Activated B cell treated with CpG ODN at 0.5 μM for 24 hours (primary cell): ENCODE measurements at regions of chr1 and their contacts with region 1.

Region 1: DNA sequence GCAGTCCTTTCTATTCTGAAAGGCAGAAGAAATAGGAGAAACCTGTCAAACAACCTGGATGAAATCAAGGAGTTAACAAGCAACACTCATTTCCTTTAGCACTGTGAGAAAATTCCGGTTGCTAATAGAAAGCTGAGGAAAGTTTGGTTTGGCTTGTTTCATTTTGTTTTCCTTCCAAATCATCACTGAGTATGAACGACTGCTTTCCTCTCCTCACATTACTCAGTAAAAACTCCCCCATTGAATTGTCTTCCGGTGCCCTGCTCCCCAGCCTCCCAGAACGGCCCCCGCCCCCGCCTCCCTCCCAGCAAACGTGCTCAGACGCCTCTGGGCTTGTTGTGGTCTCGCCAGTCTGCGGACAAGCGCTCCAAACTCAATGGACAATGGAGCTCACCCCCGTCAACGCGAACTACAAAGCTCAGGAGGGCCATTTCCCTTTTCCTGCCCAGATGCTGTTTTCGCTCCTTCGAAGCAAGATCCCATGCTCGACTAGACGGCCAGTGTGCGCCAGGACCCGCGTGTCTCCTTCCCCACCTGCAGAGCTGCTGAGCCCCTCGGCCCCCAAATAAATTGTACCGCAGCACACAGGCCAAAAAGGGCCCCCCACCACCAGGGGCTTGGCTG is 747 bp downstream of the STX6 start:
- DNase-seq: no peak
- ATAC-seq: peak; percentile 37
- H3K4me3 Mint-ChIP-seq: peak overlapping the region; percentile 96
- H3K27ac Mint-ChIP-seq: peak overlapping the region; percentile 94
- H3K4me1 Mint-ChIP-seq: peaks cover 40% of the 10 kb centered on the region
- H3K27me3 Mint-ChIP-seq: no peaks in the 10 kb centered on the region
- CTCF ChIP-seq: no peak

Region 2: DNA sequence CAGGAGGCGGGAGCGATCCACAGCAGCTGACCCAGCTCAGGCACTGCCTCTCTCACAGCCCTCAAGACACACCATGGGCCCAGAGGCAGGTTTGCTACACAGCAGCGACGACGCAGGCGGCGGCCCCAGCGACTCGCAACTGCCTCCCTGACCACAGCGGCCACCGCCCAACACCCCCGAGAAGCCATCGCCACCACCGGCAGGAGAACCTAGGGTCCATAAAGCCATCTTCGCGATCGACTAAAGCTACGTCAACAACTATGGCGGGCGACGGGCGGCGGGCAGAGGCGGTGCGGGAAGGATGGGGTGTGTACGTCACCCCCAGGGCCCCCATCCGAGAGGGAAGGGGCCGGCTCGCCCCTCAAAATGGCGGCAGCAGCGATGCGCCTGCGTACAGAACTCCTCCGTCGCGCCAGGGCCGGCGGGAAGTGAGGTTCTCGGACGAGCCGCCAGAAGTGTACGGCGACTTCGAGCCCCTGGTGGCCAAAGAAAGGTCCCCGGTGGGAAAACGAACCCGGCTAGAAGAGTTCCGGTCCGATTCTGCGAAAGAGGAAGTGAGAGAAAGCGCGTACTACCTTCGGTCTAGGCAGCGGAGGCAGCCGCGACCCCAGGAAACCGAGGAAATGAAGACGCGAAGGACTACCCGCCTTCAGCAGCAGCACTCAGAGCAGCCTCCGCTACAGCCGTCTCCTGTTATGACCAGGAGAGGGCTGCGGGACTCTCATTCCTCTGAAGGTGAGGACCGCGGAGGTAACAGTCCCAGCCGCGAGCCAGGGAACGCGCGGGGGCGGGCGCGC is 1139.5 kb before region 1 on chr1 and contains the start of gene TOR1AIP1:
- CTCF ChIA-PET with region 1: no interaction called
- POLR2A ChIA-PET with region 1: no interaction called
- intact Hi-C with region 1: loop called (anchors 1 kb)
- DNase-seq: peak; percentile 96
- ATAC-seq: peak; percentile 76
- H3K4me3 Mint-ChIP-seq: peak within 1 kb of the TSS; percentile 100
- H3K27ac Mint-ChIP-seq: peak within 1 kb of the TSS; percentile 100
- H3K4me1 Mint-ChIP-seq: peaks cover 64% of the 10 kb centered on the region
- H3K27me3 Mint-ChIP-seq: no peaks in the 10 kb centered on the region
- CTCF ChIP-seq: no peak
- total RNA-seq, gene TOR1AIP1: 42.3 and 46.6 TPM in 2 replicates

Region 3: DNA sequence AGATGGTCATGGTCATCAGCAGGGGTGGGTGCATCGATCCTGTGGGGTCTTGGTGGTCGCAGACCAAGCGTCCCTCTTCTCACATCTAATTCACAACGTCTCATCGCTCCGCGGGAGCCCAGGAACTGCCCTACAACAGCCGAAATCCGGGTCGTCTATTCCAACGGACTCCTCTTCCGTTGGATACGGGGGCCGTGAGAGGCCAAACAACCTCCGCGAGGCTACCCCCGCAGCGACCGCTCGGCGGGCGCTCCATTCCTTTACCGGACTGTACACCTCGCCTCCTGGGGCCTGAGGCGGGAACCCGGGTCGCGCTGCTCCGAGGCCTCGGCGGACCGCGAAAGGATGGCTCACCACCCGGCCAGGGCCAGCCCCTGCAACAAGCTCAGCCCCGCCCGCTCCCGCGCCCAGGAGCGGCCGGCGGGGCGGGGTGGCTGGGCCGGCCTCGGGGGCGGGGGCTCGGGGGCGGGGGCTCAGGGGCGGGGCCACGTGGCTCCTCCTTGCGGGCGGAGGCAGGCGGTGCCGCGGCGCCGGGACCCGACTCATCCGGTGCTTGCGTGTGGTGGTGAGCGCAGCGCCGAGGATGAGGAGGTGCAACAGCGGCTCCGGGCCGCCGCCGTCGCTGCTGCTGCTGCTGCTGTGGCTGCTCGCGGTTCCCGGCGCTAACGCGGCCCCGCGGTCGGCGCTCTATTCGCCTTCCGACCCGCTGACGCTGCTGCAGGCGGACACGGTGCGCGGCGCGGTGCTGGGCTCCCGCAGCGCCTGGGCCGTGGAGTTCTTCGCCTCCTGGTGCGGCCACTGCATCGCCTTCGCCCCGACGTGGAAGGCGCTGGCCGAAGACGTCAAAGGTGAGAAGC is 867.4 kb before region 1 on chr1 and contains the start of gene QSOX1:
- CTCF ChIA-PET with region 1: no interaction called
- POLR2A ChIA-PET with region 1: no interaction called
- intact Hi-C with region 1: loop called (anchors 10 kb)
- DNase-seq: peak; percentile 79
- ATAC-seq: peak; percentile 97
- H3K4me3 Mint-ChIP-seq: peak within 1 kb of the TSS; percentile 96
- H3K27ac Mint-ChIP-seq: peak within 1 kb of the TSS; percentile 83
- H3K4me1 Mint-ChIP-seq: peaks cover 23% of the 10 kb centered on the region
- H3K27me3 Mint-ChIP-seq: no peaks in the 10 kb centered on the region
- CTCF ChIP-seq: no peak
- total RNA-seq, gene QSOX1: 11.9 and 12.9 TPM in 2 replicates

Region 4: GRCh38 chr1:180954005-180954800 is 67.7 kb before region 1 on chr1:
- CTCF ChIA-PET with region 1: no interaction called
- POLR2A ChIA-PET with region 1: no interaction called
- intact Hi-C with region 1: loop called (anchors 2 kb)
- DNase-seq: peak; percentile 46
- ATAC-seq: peak; percentile 89
- H3K4me3 Mint-ChIP-seq: peak overlapping the region; percentile 68
- H3K27ac Mint-ChIP-seq: no peak overlapping the region
- H3K4me1 Mint-ChIP-seq: peaks cover 3% of the 10 kb centered on the region
- H3K27me3 Mint-ChIP-seq: no peaks in the 10 kb centered on the region
- CTCF ChIP-seq: no peak

Region 5: GRCh38 chr1:181033799-181034451 is 12.0 kb after region 1 on chr1 and contains the start of gene MR1:
- CTCF ChIA-PET with region 1: interaction called, 5 read pairs
- POLR2A ChIA-PET with region 1: interaction called, 87 read pairs
- intact Hi-C with region 1: loop called (anchors 1 kb)
- DNase-seq: no peak
- ATAC-seq: peak; percentile 96
- H3K4me3 Mint-ChIP-seq: peak within 1 kb of the TSS; percentile 98
- H3K27ac Mint-ChIP-seq: peak within 1 kb of the TSS; percentile 99
- H3K4me1 Mint-ChIP-seq: peaks cover 60% of the 10 kb centered on the region
- H3K27me3 Mint-ChIP-seq: no peaks in the 10 kb centered on the region
- CTCF ChIP-seq: no peak
- total RNA-seq, gene MR1: 24.3 and 24.8 TPM in 2 replicates

Region 6: GRCh38 chr1:181134543-181135362 is 112.8 kb after region 1 on chr1:
- CTCF ChIA-PET with region 1: no interaction called
- POLR2A ChIA-PET with region 1: interaction called, 11 read pairs
- intact Hi-C with region 1: loop called (anchors 1 kb)
- DNase-seq: peak; percentile 63
- ATAC-seq: peak; percentile 49
- H3K4me3 Mint-ChIP-seq: peak overlapping the region; percentile 84
- H3K27ac Mint-ChIP-seq: peak overlapping the region; percentile 99
- H3K4me1 Mint-ChIP-seq: peaks cover 94% of the 10 kb centered on the region
- H3K27me3 Mint-ChIP-seq: no peaks in the 10 kb centered on the region
- CTCF ChIP-seq: no peak